Thyroid gland (tissue), 4 donors: ENCODE measurements at regions of chr1 and their contacts with region 1.

Region 1: DNA sequence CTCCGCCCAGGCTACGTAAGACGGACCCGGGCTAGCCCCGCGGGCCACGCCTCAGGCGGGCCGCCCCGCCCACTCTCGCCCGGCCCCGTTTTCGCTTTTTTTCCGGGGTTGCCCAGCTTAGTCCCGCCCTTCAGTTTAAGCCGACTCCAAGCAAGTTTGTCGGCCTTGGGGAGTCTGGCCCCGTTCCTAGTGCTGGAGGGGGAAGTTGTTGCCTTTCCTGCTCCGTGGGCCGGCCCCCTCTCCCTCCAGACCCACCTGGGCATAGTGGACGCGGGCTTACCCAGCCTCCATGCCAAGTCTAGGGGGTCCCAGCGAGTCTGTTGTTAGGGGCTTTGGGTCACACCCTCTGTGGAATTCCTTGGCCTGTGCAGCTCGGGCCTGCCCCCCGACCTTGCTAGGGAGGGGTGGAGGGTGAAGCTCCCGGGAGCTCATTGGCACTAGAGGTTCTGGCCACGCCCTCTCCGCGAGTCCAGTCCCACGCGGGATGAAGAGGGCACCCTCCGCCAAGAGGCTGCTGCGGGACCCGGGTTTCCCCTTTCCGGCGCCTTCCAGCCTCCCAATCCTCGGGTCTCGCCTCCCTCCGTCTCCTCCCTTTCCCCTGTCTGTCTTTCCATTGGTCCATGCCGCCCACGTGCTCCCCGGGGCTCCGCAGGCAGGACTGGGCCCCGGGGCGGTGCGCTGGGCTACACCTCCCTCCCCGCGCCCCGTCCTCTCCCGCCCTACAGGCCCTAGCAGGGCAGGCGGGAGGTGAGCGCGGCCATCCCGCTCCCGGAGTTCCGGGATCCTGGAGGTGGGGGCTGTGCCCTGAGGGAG is 3.3 kb downstream of the RUSC1 start:
- DNase-seq: peak; percentile 97
- H3K4me3 ChIP-seq: peak overlapping the region; percentile 66 to 84 (median 84)
- H3K27ac ChIP-seq: peak overlapping the region; percentile 80 to 97 (median 92)
- H3K4me1 ChIP-seq: peaks cover 30 to 33% of the 10 kb centered on the region in 2 donors
- H3K27me3 ChIP-seq: no peaks in the 10 kb centered on the region
- CTCF ChIP-seq: no peak
- POLR2A ChIP-seq: peak in 1 of 2 donors; percentile 77

Region 2: DNA sequence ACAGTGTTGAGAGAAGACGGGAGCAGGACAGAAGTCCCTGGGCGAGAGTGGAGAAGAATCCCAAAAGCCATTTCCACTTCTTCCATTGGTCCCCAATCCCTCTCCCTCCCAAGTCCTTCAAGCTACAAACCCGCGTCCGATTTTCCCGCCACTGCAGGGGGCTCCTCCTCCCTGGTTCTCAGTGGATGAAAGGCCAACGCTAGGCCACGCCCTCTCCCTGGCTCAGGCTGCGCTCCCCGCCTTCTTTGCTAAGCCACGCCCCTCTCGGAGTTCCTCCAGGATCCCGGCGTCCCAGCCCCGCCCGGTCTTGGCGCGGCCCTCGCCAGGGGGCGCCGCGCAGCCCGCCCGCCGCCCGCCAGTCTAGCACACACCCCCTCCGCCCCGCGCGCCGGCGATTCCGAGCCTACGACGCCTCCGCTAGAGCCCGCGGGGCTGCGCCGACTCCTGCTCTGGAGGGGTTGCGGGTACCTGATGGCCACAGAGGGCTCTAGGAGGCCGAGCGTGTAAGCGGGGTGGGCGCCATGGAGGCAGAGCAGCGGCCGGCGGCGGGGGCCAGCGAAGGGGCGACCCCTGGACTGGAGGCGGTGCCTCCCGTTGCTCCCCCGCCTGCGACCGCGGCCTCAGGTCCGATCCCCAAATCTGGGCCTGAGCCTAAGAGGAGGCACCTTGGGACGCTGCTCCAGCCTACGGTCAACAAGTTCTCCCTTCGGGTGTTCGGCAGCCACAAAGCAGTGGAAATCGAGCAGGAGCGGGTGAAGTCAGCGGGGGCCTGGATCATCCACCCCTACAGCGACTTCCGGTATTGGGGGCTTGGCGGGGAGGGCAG is 46.7 kb before region 1 on chr1 and contains the start of gene HCN3:
- intact Hi-C with region 1: loop called (anchors 5 kb)
- DNase-seq: peak; percentile 98
- H3K4me3 ChIP-seq: peak within 1 kb of the TSS; percentile 48 to 66 (median 51)
- H3K27ac ChIP-seq: peak within 1 kb of the TSS in 2 of 3 donors; percentile 15 to 53
- H3K4me1 ChIP-seq: peaks cover 15 to 19% of the 10 kb centered on the region in 2 donors
- H3K27me3 ChIP-seq: no peaks in the 10 kb centered on the region
- CTCF ChIP-seq: peak in 4 of 6 experiments; percentile 14 to 75 (median 65)
- POLR2A ChIP-seq: no peak
- total RNA-seq, gene HCN3: 1.5 to 2.9 (median 2.2) TPM